B cell (primary cell): ENCODE measurements at regions of chr2 and their contacts with region 1.

Region 1: GRCh38 chr2:86195055-86195807 is at the start of gene IMMT:
- DNase-seq: peak; percentile 94
- ATAC-seq: peak; percentile 90
- H3K4me3 ChIP-seq: peak within 1 kb of the TSS; percentile 76 to 99 (median 91)
- H3K4me3 Mint-ChIP-seq: peak within 1 kb of the TSS; percentile 94
- H3K27ac ChIP-seq: peak within 1 kb of the TSS; percentile 90 to 94
- H3K27ac Mint-ChIP-seq: peak within 1 kb of the TSS; percentile 89
- H3K4me1 ChIP-seq: peaks cover 25 to 28% of the 10 kb centered on the region in 2 donors
- H3K4me1 Mint-ChIP-seq: peaks cover 49% of the 10 kb centered on the region
- H3K27me3 ChIP-seq: no peaks in the 10 kb centered on the region
- H3K27me3 Mint-ChIP-seq: no peaks in the 10 kb centered on the region
- CTCF ChIP-seq: no peak
- total RNA-seq, gene IMMT: 63.5 and 66.0 TPM in 2 replicates

Region 2: DNA sequence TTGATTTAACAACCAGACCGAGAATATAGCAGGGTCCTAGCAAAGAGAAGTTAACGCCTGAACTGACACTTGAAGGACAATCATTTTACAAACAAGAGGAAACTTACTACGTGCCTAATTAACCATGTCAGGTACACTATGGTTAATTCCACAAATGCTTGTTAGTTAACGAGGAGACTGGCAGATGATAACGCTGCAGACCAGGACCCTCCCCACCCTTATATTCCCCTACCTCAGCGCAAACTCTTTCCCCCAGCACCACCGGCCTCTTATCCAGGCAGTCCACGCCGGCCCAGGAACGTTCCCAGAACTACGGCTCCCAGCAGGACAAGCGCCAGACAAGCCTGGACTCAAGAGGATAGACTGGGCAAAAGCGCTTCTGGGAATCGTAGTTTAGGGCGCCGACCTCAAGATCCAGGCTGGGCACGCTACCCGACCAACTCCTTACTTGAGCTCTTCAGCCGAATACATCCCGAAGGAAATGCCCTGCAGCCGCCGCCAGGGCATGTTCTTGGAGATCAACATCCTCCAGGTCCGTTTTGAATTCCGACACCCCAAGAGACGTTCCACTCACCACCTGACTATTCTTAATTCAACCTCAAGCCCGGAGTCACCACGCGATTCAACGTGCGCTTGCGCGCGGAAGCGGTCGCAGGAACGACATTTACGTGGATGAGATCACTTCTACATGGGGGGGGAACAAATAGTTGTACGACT is 89.8 kb before region 1 on chr2 and contains the start of gene POLR1A:
- CTCF ChIA-PET with region 1: no interaction called
- POLR2A ChIA-PET with region 1: interaction called, 4 read pairs
- intact Hi-C with region 1: loop called (anchors 1 kb)
- DNase-seq: peak; percentile 95
- ATAC-seq: peak; percentile 76
- H3K4me3 ChIP-seq: peak within 1 kb of the TSS; percentile 88 to 96 (median 89)
- H3K4me3 Mint-ChIP-seq: peak within 1 kb of the TSS; percentile 93
- H3K27ac ChIP-seq: peak within 1 kb of the TSS; percentile 74 to 92
- H3K27ac Mint-ChIP-seq: peak within 1 kb of the TSS; percentile 95
- H3K4me1 ChIP-seq: peaks cover 16 to 22% of the 10 kb centered on the region in 2 donors
- H3K4me1 Mint-ChIP-seq: peaks cover 50% of the 10 kb centered on the region
- H3K27me3 ChIP-seq: no peaks in the 10 kb centered on the region
- H3K27me3 Mint-ChIP-seq: no peaks in the 10 kb centered on the region
- CTCF ChIP-seq: no peak
- total RNA-seq, gene POLR1A: 32.7 and 36.8 TPM in 2 replicates

Region 3: GRCh38 chr2:86140969-86141392 is 54.2 kb before region 1 on chr2:
- CTCF ChIA-PET with region 1: no interaction called
- POLR2A ChIA-PET with region 1: no interaction called
- intact Hi-C with region 1: no loop called
- DNase-seq: no peak
- ATAC-seq: no peak
- H3K4me3 ChIP-seq: no peak overlapping the region
- H3K4me3 Mint-ChIP-seq: no peak overlapping the region
- H3K27ac ChIP-seq: no peak overlapping the region
- H3K27ac Mint-ChIP-seq: no peak overlapping the region
- H3K4me1 ChIP-seq: no peaks in the 10 kb centered on the region
- H3K4me1 Mint-ChIP-seq: no peaks in the 10 kb centered on the region
- H3K27me3 ChIP-seq: no peaks in the 10 kb centered on the region
- H3K27me3 Mint-ChIP-seq: no peaks in the 10 kb centered on the region
- CTCF ChIP-seq: no peak

Region 4: GRCh38 chr2:86238354-86238753 is 43.1 kb after region 1 on chr2:
- CTCF ChIA-PET with region 1: no interaction called
- POLR2A ChIA-PET with region 1: no interaction called
- intact Hi-C with region 1: loop called (anchors 1 kb)
- DNase-seq: peak; percentile 92
- ATAC-seq: peak; percentile 98
- H3K4me3 ChIP-seq: no peak overlapping the region
- H3K4me3 Mint-ChIP-seq: peak overlapping the region; percentile 32
- H3K27ac ChIP-seq: no peak overlapping the region
- H3K27ac Mint-ChIP-seq: peak overlapping the region; percentile 67
- H3K4me1 ChIP-seq: peaks cover 56 to 57% of the 10 kb centered on the region in 2 donors
- H3K4me1 Mint-ChIP-seq: peaks cover 53% of the 10 kb centered on the region
- H3K27me3 ChIP-seq: no peaks in the 10 kb centered on the region
- H3K27me3 Mint-ChIP-seq: no peaks in the 10 kb centered on the region
- CTCF ChIP-seq: no peak

Region 5: DNA sequence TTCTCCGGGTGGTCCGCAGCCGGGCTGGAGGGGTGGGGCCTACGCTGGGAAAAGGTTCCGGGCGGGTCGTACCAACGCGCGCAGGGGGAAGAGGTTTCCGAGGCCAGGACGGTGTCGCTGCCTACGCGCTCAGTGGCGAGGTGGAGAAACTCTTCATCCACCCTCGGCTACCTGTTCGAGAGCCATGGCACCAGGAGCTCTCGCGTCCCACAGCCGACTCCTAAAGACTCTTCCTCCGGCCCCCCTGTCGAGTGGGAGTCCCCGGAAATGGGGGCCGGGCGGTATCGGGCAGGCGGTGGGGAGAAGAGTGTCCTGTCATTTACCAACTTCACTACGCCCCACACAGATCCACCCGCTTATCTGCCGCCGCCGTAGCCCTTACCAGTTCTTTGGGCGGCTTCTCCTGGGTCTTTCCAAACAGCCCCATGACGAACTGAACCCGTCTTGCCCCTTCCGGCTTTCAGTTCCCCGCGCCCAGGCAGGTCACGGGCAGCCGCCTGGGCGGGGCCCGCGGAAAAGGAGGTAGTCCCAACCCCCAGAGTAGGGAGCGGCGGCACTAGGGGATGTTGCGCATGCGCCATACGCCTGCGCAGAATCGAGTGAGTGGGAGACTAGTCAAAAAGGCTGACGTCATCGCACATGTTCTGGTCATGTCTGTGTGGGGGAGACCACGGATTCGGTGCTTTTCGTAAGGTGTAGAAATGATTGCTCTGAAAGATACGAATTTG is 367.9 kb after region 1 on chr2 and contains the start of gene CHMP3:
- CTCF ChIA-PET with region 1: no interaction called
- POLR2A ChIA-PET with region 1: no interaction called
- intact Hi-C with region 1: loop called (anchors 5 kb)
- DNase-seq: peak; percentile 99
- ATAC-seq: peak; percentile 86
- H3K4me3 ChIP-seq: peak within 1 kb of the TSS; percentile 87 to 100 (median 95)
- H3K4me3 Mint-ChIP-seq: peak within 1 kb of the TSS; percentile 93
- H3K27ac ChIP-seq: peak within 1 kb of the TSS; percentile 99 to 100
- H3K27ac Mint-ChIP-seq: peak within 1 kb of the TSS; percentile 98
- H3K4me1 ChIP-seq: peaks cover 20 to 26% of the 10 kb centered on the region in 2 donors
- H3K4me1 Mint-ChIP-seq: peaks cover 41% of the 10 kb centered on the region
- H3K27me3 ChIP-seq: no peaks in the 10 kb centered on the region
- H3K27me3 Mint-ChIP-seq: peaks cover 3% of the 10 kb centered on the region
- CTCF ChIP-seq: no peak
- total RNA-seq, gene CHMP3: 61.4 and 72.5 TPM in 2 replicates

Region 6: GRCh38 chr2:86623651-86624541 is 428.7 kb after region 1 on chr2 and contains the start of gene RNF103:
- CTCF ChIA-PET with region 1: no interaction called
- POLR2A ChIA-PET with region 1: no interaction called
- intact Hi-C with region 1: loop called (anchors 2 kb)
- DNase-seq: peak; percentile 97
- ATAC-seq: peak; percentile 82
- H3K4me3 ChIP-seq: peak within 1 kb of the TSS; percentile 71 to 87 (median 78)
- H3K4me3 Mint-ChIP-seq: peak within 1 kb of the TSS; percentile 94
- H3K27ac ChIP-seq: peak within 1 kb of the TSS; percentile 93 to 94
- H3K27ac Mint-ChIP-seq: peak within 1 kb of the TSS; percentile 97
- H3K4me1 ChIP-seq: peaks cover 17% of the 10 kb centered on the region in 2 donors
- H3K4me1 Mint-ChIP-seq: peaks cover 35% of the 10 kb centered on the region
- H3K27me3 ChIP-seq: no peaks in the 10 kb centered on the region
- H3K27me3 Mint-ChIP-seq: no peaks in the 10 kb centered on the region
- CTCF ChIP-seq: no peak
- total RNA-seq, gene RNF103: 36.1 and 37.2 TPM in 2 replicates